Spleen (tissue), 13 donors: ENCODE measurements at regions of chr17 and their contacts with region 1.

Region 1: GRCh38 chr17:17001874-17002520 is 30.1 kb upstream of the TNFRSF13B start:
- DNase-seq: peak; percentile 95
- H3K4me3 ChIP-seq: no peak overlapping the region
- H3K27ac ChIP-seq: no peak overlapping the region
- H3K4me1 ChIP-seq: peaks cover 0 to 18% (median 9%) of the 10 kb centered on the region in 6 donors
- H3K27me3 ChIP-seq: no peaks in the 10 kb centered on the region
- CTCF ChIP-seq: peak; percentile 77 to 98 (median 93)
- POLR2A ChIP-seq: no peak

Region 2: GRCh38 chr17:17151962-17152361 is 150.0 kb after region 1 on chr17:
- intact Hi-C with region 1: loop called (anchors 10 kb)
- DNase-seq: peak; percentile 84
- H3K4me3 ChIP-seq: no peak overlapping the region
- H3K27ac ChIP-seq: peak overlapping the region in 7 of 8 donors; percentile 0 to 72 (median 60)
- H3K4me1 ChIP-seq: peaks cover 3 to 39% (median 19%) of the 10 kb centered on the region in 6 donors
- H3K27me3 ChIP-seq: no peaks in the 10 kb centered on the region
- CTCF ChIP-seq: no peak
- POLR2A ChIP-seq: no peak

Region 3: GRCh38 chr17:17313350-17313991 is 311.5 kb after region 1 on chr17:
- intact Hi-C with region 1: loop called (anchors 5 kb)
- DNase-seq: peak; percentile 89
- H3K4me3 ChIP-seq: no peak overlapping the region
- H3K27ac ChIP-seq: no peak overlapping the region
- H3K4me1 ChIP-seq: peaks cover 0 to 8% (median 0%) of the 10 kb centered on the region in 6 donors
- H3K27me3 ChIP-seq: no peaks in the 10 kb centered on the region
- CTCF ChIP-seq: peak; percentile 30 to 78 (median 60)
- POLR2A ChIP-seq: no peak